Psoas muscle (tissue), 8 donors: ENCODE measurements at regions of chr1 and their contacts with region 1.

Region 1: GRCh38 chr1:246497331-246497915 is 9.7 kb downstream of the SMYD3 start:
- DNase-seq: no peak
- ATAC-seq: peak; percentile 40 to 59 (median 50)
- H3K4me3 ChIP-seq: no peak overlapping the region
- H3K27ac ChIP-seq: no peak overlapping the region
- H3K4me1 ChIP-seq: no peaks in the 10 kb centered on the region
- H3K27me3 ChIP-seq: no peaks in the 10 kb centered on the region
- CTCF ChIP-seq: peak; percentile 79

Region 2: GRCh38 chr1:245156081-245156735 is 1341.2 kb before region 1 on chr1:
- intact Hi-C with region 1: loop called (anchors 2 to 5 kb)
- DNase-seq: peak; percentile 77 to 88
- ATAC-seq: peak; percentile 87 to 92 (median 90)
- H3K4me3 ChIP-seq: peak overlapping the region; percentile 64
- H3K27ac ChIP-seq: no peak overlapping the region
- H3K4me1 ChIP-seq: peaks cover 29% of the 10 kb centered on the region
- H3K27me3 ChIP-seq: peaks cover 0 to 86% (median 20%) of the 10 kb centered on the region in 3 donors
- CTCF ChIP-seq: peak; percentile 71

Region 3: DNA sequence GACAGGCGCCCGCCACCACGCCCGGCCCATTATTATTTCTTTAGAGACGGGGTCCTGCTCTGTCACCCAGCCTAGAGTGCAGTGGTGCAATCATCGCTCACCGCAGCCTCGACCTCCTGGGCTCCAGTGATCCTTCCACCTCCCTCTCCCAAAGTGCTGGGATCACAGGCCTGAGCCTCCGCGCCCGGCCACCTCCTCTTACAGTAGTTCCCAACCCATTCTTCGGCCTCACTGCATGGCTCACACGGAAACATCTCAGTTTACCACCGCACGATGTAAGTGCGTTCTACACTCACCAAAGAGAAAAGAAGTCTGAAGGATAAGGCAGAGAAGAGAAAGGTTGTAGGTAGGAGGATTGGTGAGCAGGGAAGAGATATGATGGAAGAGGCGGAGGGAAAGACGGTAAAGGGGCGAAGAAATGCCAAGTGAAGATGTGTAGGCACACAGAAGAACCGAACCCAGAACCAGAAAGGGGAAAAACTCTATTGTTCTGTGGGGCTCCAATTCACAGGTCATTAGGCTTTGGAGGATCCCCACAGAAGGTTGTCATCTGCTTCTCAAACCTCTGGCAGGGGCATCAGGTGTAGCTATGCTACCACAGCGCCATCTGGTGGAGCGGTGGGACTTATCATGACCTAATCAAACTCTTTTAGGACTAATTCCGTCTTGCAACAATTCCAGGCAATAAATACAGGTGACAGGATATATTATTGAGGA is 494.5 kb before region 1 on chr1:
- intact Hi-C with region 1: loop called in 1 of 2 experiments (anchors 5 kb)
- DNase-seq: peak; percentile 81 to 87
- ATAC-seq: peak; percentile 69 to 87 (median 76)
- H3K4me3 ChIP-seq: no peak overlapping the region
- H3K27ac ChIP-seq: no peak overlapping the region
- H3K4me1 ChIP-seq: peaks cover 5% of the 10 kb centered on the region
- H3K27me3 ChIP-seq: no peaks in the 10 kb centered on the region
- CTCF ChIP-seq: peak; percentile 84

Region 4: GRCh38 chr1:246012341-246012740 is 485.1 kb before region 1 on chr1:
- intact Hi-C with region 1: loop called (anchors 2 to 5 kb)
- DNase-seq: no peak
- ATAC-seq: peak in 2 of 4 donors; percentile 43 to 74
- H3K4me3 ChIP-seq: no peak overlapping the region
- H3K27ac ChIP-seq: no peak overlapping the region
- H3K4me1 ChIP-seq: no peaks in the 10 kb centered on the region
- H3K27me3 ChIP-seq: no peaks in the 10 kb centered on the region
- CTCF ChIP-seq: peak; percentile 58

Region 5: GRCh38 chr1:246435421-246436041 is 61.9 kb before region 1 on chr1:
- intact Hi-C with region 1: no loop called
- DNase-seq: no peak
- ATAC-seq: no peak
- H3K4me3 ChIP-seq: no peak overlapping the region
- H3K27ac ChIP-seq: no peak overlapping the region
- H3K4me1 ChIP-seq: no peaks in the 10 kb centered on the region
- H3K27me3 ChIP-seq: no peaks in the 10 kb centered on the region
- CTCF ChIP-seq: no peak

Region 6: GRCh38 chr1:246699095-246699735 is 201.8 kb after region 1 on chr1:
- intact Hi-C with region 1: loop called (anchors 2 to 5 kb)
- DNase-seq: peak; percentile 82 to 93
- ATAC-seq: peak; percentile 98 to 100 (median 99)
- H3K4me3 ChIP-seq: peak overlapping the region; percentile 53
- H3K27ac ChIP-seq: peak overlapping the region; percentile 86
- H3K4me1 ChIP-seq: peaks cover 6% of the 10 kb centered on the region
- H3K27me3 ChIP-seq: no peaks in the 10 kb centered on the region
- CTCF ChIP-seq: peak; percentile 85

Region 7: GRCh38 chr1:246753670-246754535 is 256.5 kb after region 1 on chr1:
- intact Hi-C with region 1: loop called (anchors 2 to 5 kb)
- DNase-seq: peak; percentile 55 to 67
- ATAC-seq: peak; percentile 80 to 96 (median 86)
- H3K4me3 ChIP-seq: no peak overlapping the region
- H3K27ac ChIP-seq: no peak overlapping the region
- H3K4me1 ChIP-seq: peaks cover 5% of the 10 kb centered on the region
- H3K27me3 ChIP-seq: no peaks in the 10 kb centered on the region
- CTCF ChIP-seq: peak; percentile 69